Sciatic nerve (tissue), 2 donors: ENCODE measurements at regions of chr9 and their contacts with region 1.

Region 1: DNA sequence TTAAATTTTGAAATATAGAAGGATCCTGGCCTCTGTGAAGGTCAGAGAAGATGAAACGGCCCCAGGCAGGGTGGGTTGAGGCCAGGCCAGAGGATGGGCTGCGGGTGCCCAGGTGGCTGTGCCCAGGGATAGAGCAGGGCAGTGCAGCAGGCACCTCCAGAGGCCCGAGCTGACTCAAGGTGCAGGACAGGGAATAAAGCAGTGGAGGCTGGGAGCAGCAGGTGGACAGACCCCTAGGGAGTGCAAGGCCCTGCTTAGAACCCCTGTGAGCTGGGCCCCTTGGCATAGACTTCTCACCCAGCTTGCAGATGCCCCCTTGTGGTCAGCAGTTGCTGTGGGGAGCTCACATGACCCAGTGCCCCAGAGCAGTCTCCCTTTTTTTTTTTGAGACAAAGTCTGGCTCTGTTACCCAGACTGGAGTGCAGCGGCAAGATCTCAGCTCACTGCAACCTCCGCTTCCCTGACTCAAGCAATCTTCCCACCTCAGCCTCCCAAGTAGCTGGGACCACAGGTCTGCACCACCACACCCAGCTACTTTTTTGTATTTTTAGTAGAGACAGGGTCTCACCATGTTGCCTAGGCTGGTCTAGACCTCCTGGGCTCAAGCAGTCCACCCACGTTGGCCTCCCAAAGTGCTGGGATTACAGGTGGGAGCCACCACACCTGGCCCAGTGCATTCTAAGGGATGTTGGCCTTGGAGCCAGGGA is 118.8 kb downstream of the WNK2 start:
- DNase-seq: peak; percentile 64
- ATAC-seq: peak; percentile 48

Region 2: DNA sequence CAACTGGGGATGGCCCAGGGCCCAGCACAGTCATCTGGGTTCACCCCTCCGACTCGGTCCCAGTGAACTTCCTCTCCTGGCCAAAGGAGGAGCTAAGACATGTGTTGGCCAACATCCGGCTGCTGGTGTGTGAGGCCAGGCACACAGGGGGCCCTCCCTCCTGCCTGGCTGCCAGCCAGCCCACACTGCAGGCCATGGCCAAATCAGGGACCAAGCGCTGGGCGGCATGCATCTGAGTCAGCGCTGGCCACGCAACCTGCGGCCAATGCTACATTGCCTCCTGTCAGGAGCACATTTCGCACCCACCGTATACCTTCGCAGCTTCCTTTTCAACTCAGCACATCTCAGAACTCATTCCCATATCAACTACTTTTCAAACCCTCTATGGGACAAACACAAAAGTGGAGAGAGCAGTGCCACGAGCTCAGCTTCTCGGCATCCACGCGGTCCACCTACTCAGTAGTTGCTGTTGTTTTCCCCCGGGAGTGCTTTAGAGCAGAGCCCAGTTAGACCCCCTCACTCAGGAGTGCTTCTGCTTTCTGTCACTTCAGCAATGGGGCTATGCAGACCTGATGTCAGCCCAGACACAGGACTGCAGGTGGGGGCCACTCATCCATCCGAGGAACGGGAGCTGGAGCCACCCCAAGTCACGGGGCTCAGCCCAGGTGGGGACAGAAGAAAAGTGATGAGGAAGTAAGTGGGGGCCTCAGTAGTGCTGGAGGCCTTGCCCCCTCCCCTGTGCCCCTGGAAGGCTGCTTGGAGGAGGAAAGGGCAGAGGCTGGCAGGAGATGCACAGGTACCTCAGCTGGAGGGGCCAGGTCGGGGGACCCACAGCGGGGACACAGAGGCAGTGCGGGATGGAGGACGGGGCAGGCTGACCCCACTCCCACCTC is 182.5 kb before region 1 on chr9:
- intact Hi-C with region 1: loop called (anchors 10 kb)
- DNase-seq: peak; percentile 91
- ATAC-seq: peak; percentile 87

Region 3: GRCh38 chr9:93159601-93160471 is 142.9 kb before region 1 on chr9:
- intact Hi-C with region 1: loop called (anchors 5 kb)
- DNase-seq: peak; percentile 93
- ATAC-seq: peak; percentile 99

Region 4: DNA sequence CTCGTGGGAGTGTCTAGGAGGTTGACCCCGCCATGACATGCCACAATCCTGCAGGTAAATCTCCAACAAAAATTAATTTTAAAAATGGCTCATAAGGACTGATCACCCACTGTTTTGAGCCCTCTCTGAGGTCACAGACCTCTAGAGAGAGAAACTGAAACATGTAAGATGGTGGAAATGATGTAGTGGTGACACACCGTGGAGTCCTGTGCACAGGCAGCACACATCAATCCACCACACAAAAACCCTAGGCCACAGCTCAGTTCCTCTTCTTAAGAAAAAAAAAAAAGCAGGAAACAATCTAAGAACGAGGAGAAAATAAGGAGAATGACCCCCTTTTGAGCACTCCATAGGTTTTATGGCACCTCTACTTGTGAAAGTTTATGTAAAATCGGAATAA is 54.9 kb after region 1 on chr9:
- intact Hi-C with region 1: no loop called
- DNase-seq: no peak
- ATAC-seq: no peak

Region 5: GRCh38 chr9:94912700-94913249 is 1610.1 kb after region 1 on chr9:
- intact Hi-C with region 1: no loop called
- DNase-seq: no peak
- ATAC-seq: no peak